ENCODE measurements at regions of chr6 and their contacts with region 1.

Region 1: GRCh38 chr6:129598244-129599187 is 111.5 kb downstream of the ARHGAP18 start:
- DNase-seq: no peak
- H3K4me3 ChIP-seq: no peak overlapping the region
- CTCF ChIP-seq: peak in 1 of 3 donors; percentile 88
- POLR2A ChIP-seq: no peak

Region 2: DNA sequence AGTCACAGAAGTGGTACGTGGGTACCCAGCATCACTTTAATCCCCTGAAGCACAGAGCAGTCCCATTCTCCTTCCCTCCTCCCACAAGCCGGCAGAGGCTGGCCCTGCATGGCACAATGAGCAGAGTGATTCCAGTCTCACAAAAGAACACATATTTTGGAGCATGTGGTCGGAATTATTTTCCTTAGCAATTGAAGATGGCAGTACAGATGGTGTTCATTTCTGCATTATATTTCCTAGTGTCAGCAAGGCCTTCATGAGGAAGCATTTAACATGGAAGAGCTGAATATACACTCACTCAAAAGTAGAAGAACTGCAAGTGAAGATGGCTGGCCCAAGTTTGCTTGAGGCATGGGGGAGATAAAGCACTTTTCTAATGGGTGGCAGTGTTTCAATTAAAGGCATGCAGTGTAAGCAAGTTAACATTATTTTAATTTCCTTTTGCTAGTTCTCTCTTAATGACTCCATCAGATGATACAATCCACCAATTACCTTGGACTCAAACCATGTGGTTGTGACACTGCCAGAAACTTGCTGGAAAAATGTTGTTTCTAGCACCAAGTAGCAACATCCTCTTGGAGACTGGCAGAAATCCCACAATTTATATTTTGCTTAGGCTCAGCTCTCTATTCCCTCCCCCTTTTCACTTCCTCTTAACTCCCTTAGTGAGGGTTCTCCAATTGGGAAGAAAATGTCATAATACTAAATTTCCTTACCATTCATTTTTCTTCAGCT is 37.0 kb after region 1 on chr6:
- intact Hi-C with region 1: no loop called
- DNase-seq: no peak
- H3K4me3 ChIP-seq: no peak overlapping the region
- CTCF ChIP-seq: no peak
- POLR2A ChIP-seq: no peak

Region 3: DNA sequence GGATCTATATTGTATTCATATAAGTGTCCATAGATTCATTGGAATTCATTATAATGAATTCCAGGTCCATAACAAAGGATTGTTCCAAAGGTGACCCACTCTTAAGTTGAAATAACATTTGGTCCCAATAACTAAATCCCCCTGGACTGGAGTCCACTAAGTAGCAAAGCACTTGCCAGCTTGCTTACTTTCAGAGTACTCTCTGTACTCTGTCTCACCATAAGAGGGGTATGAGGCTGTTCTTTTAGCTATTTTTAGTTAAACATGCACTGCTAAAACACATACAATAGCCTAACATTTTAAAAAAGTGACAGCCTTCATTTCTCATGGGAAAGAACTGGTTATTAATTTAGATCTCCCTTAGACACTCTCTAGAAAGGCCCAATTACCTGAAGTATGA is 128.1 kb after region 1 on chr6:
- intact Hi-C with region 1: loop called (anchors 5 kb)
- DNase-seq: no peak
- H3K4me3 ChIP-seq: no peak overlapping the region
- CTCF ChIP-seq: no peak
- POLR2A ChIP-seq: no peak

Region 4: GRCh38 chr6:130018292-130018743 is 419.8 kb after region 1 on chr6 and contains the start of gene L3MBTL3:
- intact Hi-C with region 1: loop called (anchors 10 kb)
- DNase-seq: peak; percentile 73 to 97
- H3K4me3 ChIP-seq: peak within 1 kb of the TSS; percentile 50
- CTCF ChIP-seq: no peak
- POLR2A ChIP-seq: no peak
- total RNA-seq, gene L3MBTL3: 4.0 to 10.0 (median 5.9) TPM